B cell (primary cell): ENCODE measurements at regions of chr6 and their contacts with region 1.

Region 1: DNA sequence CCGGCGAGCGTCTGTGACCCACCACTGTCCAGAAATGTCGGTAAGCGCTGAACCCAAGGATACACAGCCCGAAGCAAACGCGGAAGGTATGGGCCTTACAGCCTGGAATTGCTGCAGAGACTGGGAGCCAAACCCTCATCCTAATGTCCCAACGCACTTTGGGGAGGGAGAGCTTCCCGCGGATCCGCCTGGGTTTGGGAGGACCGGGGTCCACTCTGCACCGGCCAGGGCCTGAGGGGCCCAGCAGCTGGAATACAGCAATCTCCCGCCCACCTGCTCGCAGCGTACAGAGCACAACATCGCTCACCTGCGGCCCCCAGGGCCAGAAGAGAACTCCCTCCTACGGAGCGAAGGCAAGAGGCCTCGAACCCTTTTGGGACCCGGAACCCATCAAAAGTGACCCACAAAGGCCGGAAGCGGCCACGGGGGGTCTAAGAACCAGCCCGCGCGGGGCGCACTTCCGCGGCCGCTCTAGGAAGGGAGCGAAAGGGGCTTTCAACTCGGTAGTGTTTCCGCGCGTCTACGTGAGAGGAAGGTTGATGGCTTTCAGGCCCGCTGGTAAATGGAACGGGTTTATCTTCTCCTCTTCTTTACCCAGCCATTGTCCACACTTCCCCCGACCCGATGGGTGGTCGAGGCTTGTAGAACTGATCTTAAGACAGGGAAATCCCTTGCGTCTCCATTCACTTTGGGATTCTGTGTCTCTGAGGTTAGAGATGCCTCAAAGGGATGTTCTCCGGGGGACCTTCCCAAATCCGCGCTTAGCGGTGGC is at the start of gene ZSCAN12:
- DNase-seq: peak; percentile 91
- ATAC-seq: peak; percentile 91
- H3K4me3 ChIP-seq: peak within 1 kb of the TSS; percentile 67 to 96 (median 75)
- H3K4me3 Mint-ChIP-seq: peak within 1 kb of the TSS; percentile 93
- H3K27ac ChIP-seq: peak within 1 kb of the TSS; percentile 35 to 87
- H3K27ac Mint-ChIP-seq: peak within 1 kb of the TSS; percentile 92
- H3K4me1 ChIP-seq: peaks cover 16 to 17% of the 10 kb centered on the region in 2 donors
- H3K4me1 Mint-ChIP-seq: peaks cover 34% of the 10 kb centered on the region
- H3K27me3 ChIP-seq: peaks cover 0 to 17% (median 8%) of the 10 kb centered on the region in 4 experiments
- H3K27me3 Mint-ChIP-seq: peaks cover 40% of the 10 kb centered on the region
- CTCF ChIP-seq: peak; percentile 78
- total RNA-seq, gene ZSCAN12: 14.8 and 15.6 TPM in 2 replicates

Region 2: GRCh38 chr6:27388293-27389197 is 1011.0 kb before region 1 on chr6 and contains the start of gene ZNF391:
- CTCF ChIA-PET with region 1: no interaction called
- POLR2A ChIA-PET with region 1: no interaction called
- intact Hi-C with region 1: loop called (anchors 2 kb)
- DNase-seq: peak; percentile 88
- ATAC-seq: peak; percentile 87
- H3K4me3 ChIP-seq: peak within 1 kb of the TSS; percentile 70 to 97 (median 94)
- H3K4me3 Mint-ChIP-seq: peak within 1 kb of the TSS; percentile 99
- H3K27ac ChIP-seq: peak within 1 kb of the TSS; percentile 64 to 83
- H3K27ac Mint-ChIP-seq: peak within 1 kb of the TSS; percentile 98
- H3K4me1 ChIP-seq: peaks cover 10 to 16% of the 10 kb centered on the region in 2 donors
- H3K4me1 Mint-ChIP-seq: peaks cover 17% of the 10 kb centered on the region
- H3K27me3 ChIP-seq: peaks cover 0 to 2% (median 0%) of the 10 kb centered on the region in 4 experiments
- H3K27me3 Mint-ChIP-seq: peaks cover under 1% of the 10 kb centered on the region
- CTCF ChIP-seq: no peak
- total RNA-seq, gene ZNF391: 4.4 and 7.0 TPM in 2 replicates

Region 3: DNA sequence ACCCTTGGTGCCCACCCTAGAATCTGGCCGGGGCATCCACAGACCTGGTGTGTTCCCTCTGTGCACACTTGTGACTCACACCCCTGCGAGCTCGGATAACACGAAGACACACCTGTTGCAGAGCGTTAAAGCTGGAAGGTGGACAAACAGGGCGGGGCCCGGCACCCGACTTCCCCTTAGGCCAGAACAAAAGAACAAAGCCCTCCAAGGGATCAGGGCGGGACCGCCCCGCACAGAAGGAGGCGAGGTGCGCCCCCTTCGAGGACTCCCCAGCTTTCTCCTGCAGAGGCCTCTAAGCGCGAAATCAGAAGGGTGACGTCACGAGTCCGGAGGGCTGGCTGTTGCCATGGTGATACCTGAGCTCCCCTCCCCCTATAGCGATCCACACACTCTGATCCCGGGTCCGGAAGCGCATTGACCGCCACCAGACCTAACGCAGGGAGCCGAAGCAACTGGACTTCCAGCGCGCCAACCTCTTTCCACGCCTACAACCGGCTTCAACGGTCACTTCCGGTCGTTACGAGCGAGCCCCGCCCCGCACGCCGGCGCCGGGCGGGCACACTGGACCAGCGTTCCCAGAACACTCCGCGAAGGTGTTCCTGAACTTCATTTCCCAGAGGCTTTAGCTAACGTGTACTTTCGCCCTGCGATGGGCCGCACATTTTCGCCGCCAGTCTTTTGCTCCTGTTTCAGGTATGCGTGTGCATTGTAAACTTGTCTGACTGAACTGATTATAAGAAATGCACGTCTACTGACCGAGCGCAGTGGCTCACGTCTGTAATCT is 926.7 kb before region 1 on chr6 and contains the start of gene ZNF184:
- CTCF ChIA-PET with region 1: no interaction called
- POLR2A ChIA-PET with region 1: no interaction called
- intact Hi-C with region 1: loop called (anchors 10 kb)
- DNase-seq: peak; percentile 96
- ATAC-seq: peak; percentile 92
- H3K4me3 ChIP-seq: peak within 1 kb of the TSS; percentile 75 to 93 (median 83)
- H3K4me3 Mint-ChIP-seq: peak within 1 kb of the TSS; percentile 100
- H3K27ac ChIP-seq: peak within 1 kb of the TSS; percentile 89 to 97
- H3K27ac Mint-ChIP-seq: peak within 1 kb of the TSS; percentile 99
- H3K4me1 ChIP-seq: peaks cover 16 to 22% of the 10 kb centered on the region in 2 donors
- H3K4me1 Mint-ChIP-seq: peaks cover 44% of the 10 kb centered on the region
- H3K27me3 ChIP-seq: no peaks in the 10 kb centered on the region
- H3K27me3 Mint-ChIP-seq: no peaks in the 10 kb centered on the region
- CTCF ChIP-seq: peak; percentile 31
- total RNA-seq, gene ZNF184: 11.8 TPM in 2 replicates

Region 4: GRCh38 chr6:28335564-28336283 is 63.8 kb before region 1 on chr6 and contains the start of gene ZSCAN31:
- CTCF ChIA-PET with region 1: no interaction called
- POLR2A ChIA-PET with region 1: no interaction called
- intact Hi-C with region 1: loop called (anchors 1 kb)
- DNase-seq: peak; percentile 89
- ATAC-seq: peak; percentile 87
- H3K4me3 ChIP-seq: peak within 1 kb of the TSS; percentile 72 to 98 (median 86)
- H3K4me3 Mint-ChIP-seq: no peak within 1 kb of the TSS
- H3K27ac ChIP-seq: peak within 1 kb of the TSS; percentile 95 to 96
- H3K27ac Mint-ChIP-seq: no peak within 1 kb of the TSS
- H3K4me1 ChIP-seq: peaks cover 11 to 18% of the 10 kb centered on the region in 2 donors
- H3K4me1 Mint-ChIP-seq: no peaks in the 10 kb centered on the region
- H3K27me3 ChIP-seq: no peaks in the 10 kb centered on the region
- H3K27me3 Mint-ChIP-seq: no peaks in the 10 kb centered on the region
- CTCF ChIP-seq: no peak
- total RNA-seq, gene ZSCAN31: 2.9 and 4.6 TPM in 2 replicates

Region 5: GRCh38 chr6:28349892-28350737 is 49.4 kb before region 1 on chr6 and contains the start of gene ZKSCAN3:
- CTCF ChIA-PET with region 1: interaction called, 4 read pairs
- POLR2A ChIA-PET with region 1: no interaction called
- intact Hi-C with region 1: loop called (anchors 1 kb)
- DNase-seq: peak; percentile 81
- ATAC-seq: peak; percentile 99
- H3K4me3 ChIP-seq: peak within 1 kb of the TSS; percentile 59 to 88 (median 77)
- H3K4me3 Mint-ChIP-seq: peak within 1 kb of the TSS; percentile 92
- H3K27ac ChIP-seq: peak within 1 kb of the TSS; percentile 26 to 58
- H3K27ac Mint-ChIP-seq: peak within 1 kb of the TSS; percentile 83
- H3K4me1 ChIP-seq: peaks cover 10 to 11% of the 10 kb centered on the region in 2 donors
- H3K4me1 Mint-ChIP-seq: peaks cover 23% of the 10 kb centered on the region
- H3K27me3 ChIP-seq: peaks cover 0 to 3% (median 0%) of the 10 kb centered on the region in 4 experiments
- H3K27me3 Mint-ChIP-seq: peaks cover 8% of the 10 kb centered on the region
- CTCF ChIP-seq: no peak
- total RNA-seq, gene ZKSCAN3: 11.0 and 11.9 TPM in 2 replicates

Region 6: DNA sequence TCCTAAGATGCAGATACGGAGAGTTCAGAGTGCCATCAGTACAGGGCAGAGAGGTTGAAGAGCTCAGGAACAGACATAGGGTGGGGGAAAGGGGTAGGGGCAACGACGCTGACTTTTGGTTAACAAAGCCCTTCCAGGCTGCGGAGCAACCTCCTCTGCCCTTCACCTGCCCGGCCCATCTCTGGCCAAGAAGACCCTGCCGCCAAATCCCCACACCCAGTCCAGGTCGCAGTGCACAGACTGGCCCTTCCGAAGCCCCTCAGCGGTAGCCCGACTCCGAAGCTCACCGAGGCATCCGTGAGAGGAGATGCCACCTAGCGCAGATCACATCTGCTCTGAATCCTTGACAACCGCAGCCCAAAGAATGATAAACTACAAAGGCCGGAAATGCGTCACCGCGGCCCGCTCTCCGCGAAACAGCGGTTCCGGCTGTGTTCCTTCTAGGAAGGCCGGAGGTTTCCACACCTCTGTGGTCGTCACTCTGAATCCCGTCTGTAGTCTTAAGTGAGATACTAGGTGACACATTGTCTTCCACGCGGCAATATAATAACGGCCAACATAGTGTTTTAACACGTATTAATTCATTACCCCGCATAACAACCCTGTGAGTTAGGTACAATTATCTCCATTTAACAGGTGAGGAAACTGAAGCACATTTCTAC is 43.7 kb after region 1 on chr6 and contains the start of gene ZSCAN23:
- CTCF ChIA-PET with region 1: no interaction called
- POLR2A ChIA-PET with region 1: no interaction called
- intact Hi-C with region 1: loop called (anchors 1 kb)
- DNase-seq: peak; percentile 80
- ATAC-seq: peak; percentile 76
- H3K4me3 ChIP-seq: peak within 1 kb of the TSS; percentile 11 to 58 (median 53)
- H3K4me3 Mint-ChIP-seq: peak within 1 kb of the TSS; percentile 94
- H3K27ac ChIP-seq: no peak within 1 kb of the TSS
- H3K27ac Mint-ChIP-seq: peak within 1 kb of the TSS; percentile 64
- H3K4me1 ChIP-seq: peaks cover 16 to 23% of the 10 kb centered on the region in 2 donors
- H3K4me1 Mint-ChIP-seq: peaks cover 16% of the 10 kb centered on the region
- H3K27me3 ChIP-seq: peaks cover 0 to 44% (median 34%) of the 10 kb centered on the region in 4 experiments
- H3K27me3 Mint-ChIP-seq: peaks cover 60% of the 10 kb centered on the region
- CTCF ChIP-seq: no peak
- total RNA-seq, gene ZSCAN23: 0.78 and 0.79 TPM in 2 replicates